ENCODE measurements at regions of chr12 and their contacts with region 1.

Region 1: DNA sequence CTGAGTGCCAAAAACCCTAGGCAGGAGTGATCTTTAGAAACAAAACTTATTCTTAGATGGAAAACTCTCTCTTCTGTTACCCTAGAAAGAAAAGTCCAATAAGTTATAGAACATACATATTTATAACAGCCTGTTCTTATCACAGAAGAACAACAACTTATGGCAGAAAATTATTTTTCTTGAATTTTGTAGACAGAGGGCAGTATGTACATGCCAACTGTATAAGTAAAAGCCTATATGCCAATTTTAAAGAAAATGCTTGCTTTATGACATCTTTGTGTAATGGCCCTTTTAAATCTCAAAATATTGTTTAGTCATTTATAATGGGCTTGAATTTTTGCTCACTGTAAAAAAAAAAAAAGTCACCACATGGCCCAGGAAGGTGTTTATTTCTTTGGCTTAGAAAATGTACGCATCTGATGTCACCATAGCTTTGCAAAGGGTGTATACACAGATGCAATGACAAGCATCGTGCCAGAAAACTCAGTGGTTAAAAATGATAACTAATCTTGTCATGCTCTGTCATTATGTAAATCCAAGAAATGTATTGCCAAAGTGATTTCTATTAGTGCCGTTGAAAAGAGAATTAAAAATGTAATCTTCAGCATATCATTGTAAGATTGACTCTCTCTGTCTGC is 38.3 kb upstream of the GRIP1 start:
- DNase-seq: peak in 1 of 9 experiments; percentile 23
- ATAC-seq: no peak
- H3K4me3 ChIP-seq: no peak overlapping the region
- H3K4me3 Mint-ChIP-seq: no peak overlapping the region
- H3K27ac ChIP-seq: no peak overlapping the region
- H3K27ac Mint-ChIP-seq: no peak overlapping the region
- H3K4me1 ChIP-seq: peaks cover 21% of the 10 kb centered on the region
- H3K4me1 Mint-ChIP-seq: peaks cover 32% of the 10 kb centered on the region
- H3K27me3 ChIP-seq: no peaks in the 10 kb centered on the region
- H3K27me3 Mint-ChIP-seq: no peaks in the 10 kb centered on the region
- CTCF ChIP-seq: no peak

Region 2: DNA sequence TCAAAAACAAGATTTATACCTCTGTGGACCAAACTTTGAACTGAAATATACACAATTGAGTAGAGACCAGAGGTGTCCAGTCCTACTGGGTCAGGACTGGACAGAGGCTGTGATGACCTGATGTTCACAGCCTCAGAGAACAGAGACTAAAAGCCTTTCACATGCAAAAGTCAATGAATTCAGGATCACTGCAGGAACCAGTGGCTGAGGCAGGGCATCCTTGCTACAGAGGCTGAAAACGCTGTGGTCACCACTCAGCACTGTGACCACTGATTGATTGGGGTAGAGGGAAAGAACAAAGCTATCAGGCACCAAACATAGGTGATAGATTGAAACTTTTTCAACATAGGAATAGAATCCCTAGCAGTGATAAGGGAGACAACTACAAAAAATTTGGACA is 63.4 kb before region 1 on chr12:
- CTCF ChIA-PET with region 1: no interaction called
- POLR2A ChIA-PET with region 1: no interaction called
- intact Hi-C with region 1: no loop called
- DNase-seq: no peak
- ATAC-seq: no peak
- H3K4me3 ChIP-seq: no peak overlapping the region
- H3K4me3 Mint-ChIP-seq: no peak overlapping the region
- H3K27ac ChIP-seq: no peak overlapping the region
- H3K27ac Mint-ChIP-seq: no peak overlapping the region
- H3K4me1 ChIP-seq: no peaks in the 10 kb centered on the region
- H3K4me1 Mint-ChIP-seq: no peaks in the 10 kb centered on the region
- H3K27me3 ChIP-seq: no peaks in the 10 kb centered on the region
- H3K27me3 Mint-ChIP-seq: peaks cover 1% of the 10 kb centered on the region
- CTCF ChIP-seq: no peak

Region 3: DNA sequence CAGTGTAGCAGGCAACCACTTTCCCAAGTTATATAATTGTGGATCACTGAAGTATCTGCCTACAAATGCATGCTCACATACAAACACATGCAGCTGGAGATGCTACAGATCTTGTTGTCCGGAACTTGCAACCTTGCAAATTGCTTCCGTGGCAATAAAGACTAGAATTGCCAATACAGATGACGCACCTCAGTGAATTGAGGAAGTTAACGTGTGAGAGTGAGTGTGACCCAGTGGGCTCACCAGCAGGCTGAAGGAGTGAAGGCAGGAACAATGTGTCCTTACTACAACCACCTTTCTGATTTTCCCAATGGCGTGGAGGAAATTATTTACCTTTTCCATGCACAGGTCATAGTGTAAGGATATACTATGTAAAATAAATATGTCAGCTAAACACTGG is 51.1 kb after region 1 on chr12:
- CTCF ChIA-PET with region 1: no interaction called
- POLR2A ChIA-PET with region 1: no interaction called
- intact Hi-C with region 1: loop called in 1 of 2 experiments (anchors 5 kb)
- DNase-seq: no peak
- ATAC-seq: no peak
- H3K4me3 ChIP-seq: no peak overlapping the region
- H3K4me3 Mint-ChIP-seq: no peak overlapping the region
- H3K27ac ChIP-seq: no peak overlapping the region
- H3K27ac Mint-ChIP-seq: no peak overlapping the region
- H3K4me1 ChIP-seq: peaks cover 40% of the 10 kb centered on the region
- H3K4me1 Mint-ChIP-seq: peaks cover 47% of the 10 kb centered on the region
- H3K27me3 ChIP-seq: no peaks in the 10 kb centered on the region
- H3K27me3 Mint-ChIP-seq: no peaks in the 10 kb centered on the region
- CTCF ChIP-seq: no peak

Region 4: GRCh38 chr12:67426067-67426466 is 708.9 kb after region 1 on chr12:
- CTCF ChIA-PET with region 1: no interaction called
- POLR2A ChIA-PET with region 1: no interaction called
- intact Hi-C with region 1: no loop called
- DNase-seq: peak in 1 of 9 experiments; percentile 12
- ATAC-seq: no peak
- H3K4me3 ChIP-seq: no peak overlapping the region
- H3K4me3 Mint-ChIP-seq: no peak overlapping the region
- H3K27ac ChIP-seq: no peak overlapping the region
- H3K27ac Mint-ChIP-seq: no peak overlapping the region
- H3K4me1 ChIP-seq: no peaks in the 10 kb centered on the region
- H3K4me1 Mint-ChIP-seq: peaks cover 11% of the 10 kb centered on the region
- H3K27me3 ChIP-seq: no peaks in the 10 kb centered on the region
- H3K27me3 Mint-ChIP-seq: peaks cover 2% of the 10 kb centered on the region
- CTCF ChIP-seq: no peak